CD8-positive, alpha-beta T cell (primary cell): ENCODE measurements at regions of chr14 and their contacts with region 1.

Region 1: GRCh38 chr14:75660630-75661494 is at the starts of genes ERG28 and TTLL5:
- DNase-seq: peak; percentile 94 to 99 (median 95)
- ATAC-seq: peak; percentile 93
- H3K4me3 ChIP-seq: peak within 1 kb of the TSS; percentile 86 to 87
- H3K4me3 Mint-ChIP-seq: peak within 1 kb of the TSS; percentile 98
- H3K27ac ChIP-seq: peak within 1 kb of the TSS; percentile 85 to 93
- H3K27ac Mint-ChIP-seq: peak within 1 kb of the TSS; percentile 97
- H3K4me1 ChIP-seq: peaks cover 10% of the 10 kb centered on the region
- H3K4me1 Mint-ChIP-seq: peaks cover 36% of the 10 kb centered on the region
- H3K27me3 ChIP-seq: no peaks in the 10 kb centered on the region
- H3K27me3 Mint-ChIP-seq: no peaks in the 10 kb centered on the region
- CTCF ChIP-seq: no peak
- total RNA-seq, gene ERG28: 6.6 to 6.7 TPM
- total RNA-seq, gene TTLL5: 17.6 to 17.7 TPM

Region 2: DNA sequence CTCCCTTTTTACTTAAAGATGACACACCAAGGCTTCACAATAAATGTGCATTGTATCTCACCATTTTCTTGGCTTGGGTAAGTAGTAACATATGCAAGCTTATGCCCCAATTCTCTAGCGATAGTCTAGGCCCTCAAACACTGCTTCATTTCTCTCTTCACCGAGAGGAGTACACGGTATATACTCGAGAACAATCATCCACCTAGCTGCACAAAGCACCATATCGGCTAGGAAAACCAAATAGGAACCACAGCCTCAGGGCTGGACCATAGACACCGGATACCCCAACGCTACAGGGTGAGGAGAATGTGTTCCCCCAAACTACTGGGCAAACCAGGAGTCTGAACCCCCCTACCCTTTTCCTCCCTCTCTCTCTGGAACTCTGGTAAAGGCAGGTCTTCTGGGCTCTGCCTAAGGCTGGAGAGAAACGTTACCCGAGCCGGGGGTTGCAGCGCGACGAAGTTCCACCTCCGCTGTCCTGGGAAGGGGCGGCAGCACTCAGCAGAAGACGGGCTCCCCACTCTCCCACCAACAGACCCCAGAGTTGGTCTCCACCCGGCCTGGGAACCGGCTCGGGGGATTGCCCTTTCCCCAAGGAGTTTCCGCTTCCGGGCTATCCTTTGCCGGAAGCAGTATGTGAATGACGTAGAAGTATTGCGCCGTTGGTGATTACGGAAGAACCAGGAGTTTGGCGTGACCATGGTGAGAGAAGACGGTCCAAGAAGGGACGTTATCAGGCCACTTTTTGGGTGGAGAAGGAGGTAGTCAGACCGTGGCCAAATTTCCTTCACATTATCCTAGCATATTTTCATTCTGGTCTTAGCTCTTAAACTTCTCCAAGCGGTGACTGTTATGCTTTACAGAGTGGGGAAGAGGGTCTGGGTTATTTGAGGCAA is 948.1 kb before region 1 on chr14 and contains the starts of genes AREL1 and FCF1:
- CTCF ChIA-PET with region 1: interaction called, 3 read pairs
- POLR2A ChIA-PET with region 1: no interaction called
- intact Hi-C with region 1: loop called in 1 of 2 experiments (anchors 5 kb)
- DNase-seq: peak; percentile 56 to 94 (median 80)
- ATAC-seq: peak; percentile 93
- H3K4me3 ChIP-seq: peak within 1 kb of the TSS; percentile 63 to 87
- H3K4me3 Mint-ChIP-seq: peak within 1 kb of the TSS; percentile 98
- H3K27ac ChIP-seq: peak within 1 kb of the TSS; percentile 78 to 93
- H3K27ac Mint-ChIP-seq: peak within 1 kb of the TSS; percentile 99
- H3K4me1 ChIP-seq: peaks cover 24% of the 10 kb centered on the region
- H3K4me1 Mint-ChIP-seq: peaks cover 65% of the 10 kb centered on the region
- H3K27me3 ChIP-seq: no peaks in the 10 kb centered on the region
- H3K27me3 Mint-ChIP-seq: no peaks in the 10 kb centered on the region
- CTCF ChIP-seq: no peak
- total RNA-seq, gene AREL1: 44.5 to 60.1 TPM
- total RNA-seq, gene FCF1: 32.6 to 34.0 TPM

Region 3: GRCh38 chr14:75063407-75064213 is 597.3 kb before region 1 on chr14 and contains the start of gene ACYP1:
- CTCF ChIA-PET with region 1: no interaction called
- POLR2A ChIA-PET with region 1: no interaction called
- intact Hi-C with region 1: loop called in 1 of 2 experiments (anchors 5 kb)
- DNase-seq: peak; percentile 78 to 93 (median 89)
- ATAC-seq: peak; percentile 99
- H3K4me3 ChIP-seq: peak within 1 kb of the TSS; percentile 80 to 84
- H3K4me3 Mint-ChIP-seq: peak within 1 kb of the TSS; percentile 99
- H3K27ac ChIP-seq: peak within 1 kb of the TSS; percentile 60 to 68
- H3K27ac Mint-ChIP-seq: peak within 1 kb of the TSS; percentile 95
- H3K4me1 ChIP-seq: peaks cover 9% of the 10 kb centered on the region
- H3K4me1 Mint-ChIP-seq: peaks cover 27% of the 10 kb centered on the region
- H3K27me3 ChIP-seq: no peaks in the 10 kb centered on the region
- H3K27me3 Mint-ChIP-seq: no peaks in the 10 kb centered on the region
- CTCF ChIP-seq: no peak
- total RNA-seq, gene ACYP1: 4.3 to 5.3 TPM

Region 4: GRCh38 chr14:75522224-75522982 is 138.5 kb before region 1 on chr14 and contains the start of gene BATF:
- CTCF ChIA-PET with region 1: no interaction called
- POLR2A ChIA-PET with region 1: no interaction called
- intact Hi-C with region 1: loop called in 1 of 2 experiments (anchors 5 kb)
- DNase-seq: peak; percentile 37 to 90 (median 73)
- ATAC-seq: peak; percentile 77
- H3K4me3 ChIP-seq: peak within 1 kb of the TSS; percentile 75 to 79
- H3K4me3 Mint-ChIP-seq: peak within 1 kb of the TSS; percentile 98
- H3K27ac ChIP-seq: peak within 1 kb of the TSS; percentile 46 to 93
- H3K27ac Mint-ChIP-seq: peak within 1 kb of the TSS; percentile 93
- H3K4me1 ChIP-seq: peaks cover 53% of the 10 kb centered on the region
- H3K4me1 Mint-ChIP-seq: peaks cover 66% of the 10 kb centered on the region
- H3K27me3 ChIP-seq: no peaks in the 10 kb centered on the region
- H3K27me3 Mint-ChIP-seq: no peaks in the 10 kb centered on the region
- CTCF ChIP-seq: no peak
- total RNA-seq, gene BATF: 3.2 to 4.3 TPM

Region 5: GRCh38 chr14:75577729-75578101 is 83.1 kb before region 1 on chr14:
- CTCF ChIA-PET with region 1: interaction called, 293 read pairs
- POLR2A ChIA-PET with region 1: interaction called, 5 read pairs
- intact Hi-C with region 1: no loop called
- DNase-seq: peak; percentile 34 to 79 (median 69)
- ATAC-seq: peak; percentile 80
- H3K4me3 ChIP-seq: peak overlapping the region; percentile 64 to 72
- H3K4me3 Mint-ChIP-seq: peak overlapping the region; percentile 91
- H3K27ac ChIP-seq: no peak overlapping the region
- H3K27ac Mint-ChIP-seq: peak overlapping the region; percentile 53
- H3K4me1 ChIP-seq: peaks cover 10% of the 10 kb centered on the region
- H3K4me1 Mint-ChIP-seq: peaks cover 23% of the 10 kb centered on the region
- H3K27me3 ChIP-seq: no peaks in the 10 kb centered on the region
- H3K27me3 Mint-ChIP-seq: no peaks in the 10 kb centered on the region
- CTCF ChIP-seq: peak; percentile 62